ENCODE measurements at regions of chr4 and their contacts with region 1.

Region 1: DNA sequence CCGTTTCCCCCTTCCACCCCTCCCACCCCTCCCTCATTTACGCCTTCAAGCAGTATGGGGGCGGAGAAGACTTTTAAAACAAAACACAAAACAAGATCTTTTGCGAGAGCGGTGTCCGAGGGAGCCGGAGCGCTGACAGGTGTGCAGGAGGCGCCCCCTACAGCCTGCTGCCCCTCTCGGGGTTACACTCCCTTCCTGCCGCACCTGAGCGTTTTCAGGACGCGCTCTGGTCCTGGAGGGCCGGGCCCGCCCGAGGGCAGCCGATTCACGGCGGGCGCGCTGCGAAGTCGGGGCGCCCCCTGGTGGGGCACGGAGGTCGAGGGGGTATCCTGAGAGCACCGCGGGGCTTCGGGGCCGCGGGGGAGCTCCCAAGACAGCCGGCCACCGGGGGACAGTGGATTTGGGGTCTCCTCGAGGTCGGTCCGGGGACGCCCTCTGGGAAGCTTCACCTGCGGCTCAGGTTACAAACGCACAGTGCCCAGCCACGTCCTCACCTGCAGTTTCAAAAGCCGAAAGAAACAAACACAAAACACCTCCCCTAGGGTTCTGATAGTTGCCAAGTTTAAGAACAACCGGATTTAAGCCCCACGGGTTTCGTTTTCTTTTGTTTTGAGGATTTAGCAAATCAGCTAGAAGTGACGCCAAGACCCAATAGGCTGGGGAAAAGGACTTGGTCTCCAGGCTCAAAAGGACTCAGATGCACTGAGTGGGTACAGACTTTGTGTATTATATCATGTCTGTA is 8.0 kb upstream of the NEUROG2 start:
- DNase-seq: peak; percentile 70
- H3K4me3 Mint-ChIP-seq: peak overlapping the region; percentile 82
- H3K27ac Mint-ChIP-seq: no peak overlapping the region
- H3K4me1 Mint-ChIP-seq: peaks cover 49% of the 10 kb centered on the region
- H3K27me3 Mint-ChIP-seq: peaks cover 71% of the 10 kb centered on the region

Region 2: GRCh38 chr4:110617646-110618580 is 1906.0 kb before region 1 on chr4:
- intact Hi-C with region 1: loop called (anchors 5 kb)
- DNase-seq: no peak
- H3K4me3 Mint-ChIP-seq: no peak overlapping the region
- H3K27ac Mint-ChIP-seq: peak overlapping the region; percentile 73
- H3K4me1 Mint-ChIP-seq: no peaks in the 10 kb centered on the region
- H3K27me3 Mint-ChIP-seq: peaks cover 87% of the 10 kb centered on the region

Region 3: GRCh38 chr4:112099701-112100297 is 424.1 kb before region 1 on chr4:
- intact Hi-C with region 1: loop called (anchors 1 kb)
- DNase-seq: no peak
- H3K4me3 Mint-ChIP-seq: no peak overlapping the region
- H3K27ac Mint-ChIP-seq: no peak overlapping the region
- H3K4me1 Mint-ChIP-seq: peaks cover 20% of the 10 kb centered on the region
- H3K27me3 Mint-ChIP-seq: peaks cover 22% of the 10 kb centered on the region

Region 4: DNA sequence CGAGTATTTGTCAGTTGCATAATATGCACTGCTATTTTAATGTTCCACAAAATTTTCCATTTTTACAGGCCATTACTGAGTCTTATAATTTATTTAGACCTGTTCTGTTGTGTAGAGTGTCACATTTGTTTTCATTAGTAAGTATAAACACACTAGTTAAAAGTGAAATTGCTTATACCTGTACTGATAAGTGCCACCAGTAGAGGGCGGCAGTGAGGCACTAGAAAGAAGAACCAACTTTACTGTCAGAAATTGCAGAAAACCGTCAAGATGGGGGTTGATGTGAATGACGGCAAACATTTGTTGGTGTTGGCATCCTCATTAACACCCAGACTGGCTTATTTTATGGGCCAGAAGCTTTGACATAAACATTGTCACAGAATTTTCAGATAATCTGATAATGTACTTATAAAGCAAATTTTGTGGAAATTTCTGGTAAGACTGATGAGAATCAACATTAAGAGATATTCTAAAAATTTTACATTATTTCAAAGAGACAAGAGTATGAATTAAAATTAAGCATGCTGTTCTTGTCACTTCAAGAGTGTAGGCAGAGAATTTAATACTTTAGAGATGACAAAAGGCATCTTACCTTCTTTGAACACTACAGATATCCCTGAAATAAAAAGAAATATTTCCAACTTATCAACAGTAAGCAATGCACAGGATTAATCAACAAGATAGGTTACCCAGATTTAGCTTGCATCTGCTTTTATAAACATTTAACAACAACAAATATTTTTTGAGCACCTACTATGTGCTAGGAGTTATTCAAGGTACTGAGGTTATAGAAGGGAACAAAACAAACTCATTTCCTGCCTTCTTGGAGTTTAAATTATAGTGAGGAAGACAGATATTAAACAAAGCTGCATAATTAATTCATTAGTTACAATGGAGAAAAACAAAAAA is 201.9 kb before region 1 on chr4:
- intact Hi-C with region 1: loop called (anchors 1 kb)
- DNase-seq: peak; percentile 64
- H3K4me3 Mint-ChIP-seq: no peak overlapping the region
- H3K27ac Mint-ChIP-seq: no peak overlapping the region
- H3K4me1 Mint-ChIP-seq: peaks cover 52% of the 10 kb centered on the region
- H3K27me3 Mint-ChIP-seq: no peaks in the 10 kb centered on the region

Region 5: DNA sequence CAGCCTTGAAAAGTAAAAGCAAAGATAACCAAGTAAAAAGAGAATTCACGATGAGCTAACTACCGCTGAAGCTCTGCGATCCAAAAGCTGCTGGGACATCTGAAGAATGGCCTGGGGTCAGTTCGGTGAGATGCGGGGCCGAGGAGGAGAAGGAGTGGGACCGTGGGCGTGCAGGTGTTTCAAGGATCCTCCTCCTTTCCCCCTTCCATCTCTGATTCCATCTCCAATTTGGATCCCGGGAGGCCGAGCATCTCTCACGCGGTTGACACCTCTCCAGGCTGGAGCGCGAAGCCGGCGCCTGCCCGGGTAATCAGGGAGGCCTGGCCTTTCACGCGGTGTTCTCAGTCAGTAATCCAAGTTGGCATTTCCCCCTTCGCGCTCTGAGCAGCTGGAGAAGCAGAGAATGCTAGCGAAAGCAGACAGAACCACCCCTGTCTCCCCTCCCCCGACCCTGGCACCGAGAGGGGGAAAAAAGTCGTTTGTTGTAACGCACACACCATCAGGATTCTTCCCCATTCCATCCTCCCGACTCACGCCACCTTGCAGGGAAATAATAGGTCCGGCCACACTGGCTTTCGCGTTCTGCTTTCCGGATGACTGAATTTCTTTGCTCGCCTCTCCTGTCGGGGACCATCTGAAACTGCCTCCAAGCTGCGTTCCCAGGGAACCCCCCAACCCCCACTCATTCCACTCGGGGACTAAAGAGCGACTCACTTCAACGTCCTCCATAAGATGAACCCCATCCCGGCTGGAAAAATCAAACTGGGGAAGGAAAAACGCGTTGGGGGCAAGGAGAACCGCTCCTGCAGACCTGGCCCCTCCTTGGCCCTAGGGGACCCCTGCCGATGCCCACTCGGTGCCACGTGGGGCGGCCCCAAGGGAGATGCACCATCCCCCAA is 14.4 kb before region 1 on chr4:
- intact Hi-C with region 1: loop called (anchors 2 kb)
- DNase-seq: no peak
- H3K4me3 Mint-ChIP-seq: peak overlapping the region; percentile 58
- H3K27ac Mint-ChIP-seq: no peak overlapping the region
- H3K4me1 Mint-ChIP-seq: peaks cover 54% of the 10 kb centered on the region
- H3K27me3 Mint-ChIP-seq: peaks cover 82% of the 10 kb centered on the region

Region 6: GRCh38 chr4:112616984-112617383 is 93.0 kb after region 1 on chr4:
- intact Hi-C with region 1: no loop called
- DNase-seq: no peak
- H3K4me3 Mint-ChIP-seq: no peak overlapping the region
- H3K27ac Mint-ChIP-seq: no peak overlapping the region
- H3K4me1 Mint-ChIP-seq: no peaks in the 10 kb centered on the region
- H3K27me3 Mint-ChIP-seq: no peaks in the 10 kb centered on the region

Region 7: GRCh38 chr4:112693507-112693906 is 169.6 kb after region 1 on chr4:
- intact Hi-C with region 1: no loop called
- DNase-seq: no peak
- H3K4me3 Mint-ChIP-seq: no peak overlapping the region
- H3K27ac Mint-ChIP-seq: no peak overlapping the region
- H3K4me1 Mint-ChIP-seq: no peaks in the 10 kb centered on the region
- H3K27me3 Mint-ChIP-seq: peaks cover 3% of the 10 kb centered on the region

Region 8: DNA sequence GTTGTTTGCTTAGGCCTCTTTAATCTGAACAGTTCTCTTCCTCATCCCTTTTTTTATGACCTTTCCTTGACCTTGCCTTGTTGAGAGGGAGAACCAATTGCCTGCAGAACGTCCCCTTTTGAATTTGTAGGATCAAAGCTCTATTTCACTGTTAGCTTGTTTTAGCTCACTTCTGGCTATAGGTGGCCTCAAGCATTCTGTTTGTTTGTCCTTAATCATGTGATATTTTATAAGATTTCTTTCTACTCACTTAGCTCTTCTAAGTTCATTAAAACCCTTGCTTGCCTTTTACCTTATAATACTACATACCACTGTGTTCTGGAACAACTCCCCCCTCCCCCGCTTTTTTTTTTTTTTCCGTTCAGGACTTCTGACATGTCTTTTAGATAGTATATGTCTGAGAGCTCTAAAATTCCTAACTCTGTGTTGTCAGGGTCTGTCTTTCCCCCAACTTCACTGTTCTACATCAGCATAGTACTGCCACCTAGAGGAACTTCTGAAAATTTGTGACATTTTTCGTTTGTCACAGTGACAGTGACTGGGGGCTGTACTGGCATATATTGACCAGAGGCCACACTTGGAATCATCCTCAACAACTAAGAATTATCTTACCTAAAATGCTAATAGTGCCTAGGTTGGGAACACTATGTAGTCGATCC is 241.5 kb after region 1 on chr4:
- intact Hi-C with region 1: loop called (anchors 5 kb)
- DNase-seq: no peak
- H3K4me3 Mint-ChIP-seq: no peak overlapping the region
- H3K27ac Mint-ChIP-seq: no peak overlapping the region
- H3K4me1 Mint-ChIP-seq: peaks cover 5% of the 10 kb centered on the region
- H3K27me3 Mint-ChIP-seq: peaks cover 6% of the 10 kb centered on the region